ENCODE measurements at regions of chr1 and their contacts with region 1.

Region 1: DNA sequence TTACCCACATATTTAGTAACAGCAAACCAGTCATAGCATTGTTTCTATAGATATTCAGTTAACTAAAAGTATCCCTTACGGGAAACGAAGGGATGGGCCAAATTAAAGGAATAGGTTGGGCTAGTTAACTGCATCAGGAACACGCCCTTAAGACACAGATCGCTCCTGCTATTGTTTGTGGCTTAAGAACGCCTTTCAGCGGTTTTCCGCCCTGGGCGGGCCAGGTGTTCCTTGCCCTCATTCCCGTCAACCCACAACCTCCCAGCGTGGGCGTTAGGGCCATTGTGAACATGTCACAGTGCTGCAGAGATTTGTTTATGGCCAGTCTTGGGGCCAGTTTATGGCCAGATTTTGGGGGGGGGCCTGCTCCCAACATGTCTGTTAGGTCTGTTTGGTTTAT is 14.7 kb downstream of the TNFRSF18 start:
- DNase-seq: peak in 1 of 6 donors; percentile 12
- ATAC-seq: no peak
- H3K4me3 ChIP-seq: no peak overlapping the region
- H3K27ac ChIP-seq: no peak overlapping the region
- H3K4me1 ChIP-seq: no peaks in the 10 kb centered on the region
- H3K27me3 ChIP-seq: no peaks in the 10 kb centered on the region
- CTCF ChIP-seq: no peak

Region 2: DNA sequence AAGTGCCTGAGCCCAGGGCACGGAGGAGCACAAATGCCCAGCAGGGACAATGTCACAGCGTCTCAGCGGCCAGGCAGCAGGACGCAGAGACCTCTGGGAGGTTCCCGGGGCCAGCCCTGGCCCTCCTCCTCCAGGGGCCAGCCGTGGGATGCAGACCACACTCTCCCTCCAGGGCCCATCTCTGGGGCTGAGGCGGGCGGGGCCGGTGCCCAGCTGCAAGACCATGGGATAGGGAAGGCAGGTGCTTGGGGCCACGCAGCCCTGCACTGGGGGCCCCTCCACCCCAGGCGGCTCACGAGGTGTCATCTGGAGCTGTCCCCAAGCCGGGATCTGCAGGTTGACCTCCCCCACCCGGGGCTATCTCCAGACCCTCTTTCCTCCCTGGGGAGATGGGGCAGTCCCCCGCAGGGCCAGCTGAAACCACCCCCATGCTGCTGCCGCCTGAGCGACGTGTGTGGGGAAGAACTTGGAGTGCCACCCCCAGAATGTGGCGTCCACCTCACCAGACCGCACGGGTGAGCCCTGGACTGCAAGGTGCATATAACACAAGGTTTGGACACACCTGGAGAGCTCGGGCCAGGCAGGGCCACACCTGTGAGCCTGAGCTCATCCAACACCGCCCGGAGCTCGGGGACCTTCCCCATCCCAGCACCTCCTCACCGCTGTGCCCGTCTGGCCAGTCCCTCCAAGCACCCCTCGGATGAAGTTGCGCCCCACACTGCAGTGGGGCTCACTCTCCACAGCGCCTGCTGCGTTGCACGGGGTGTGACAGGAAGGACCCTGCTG is 22.1 kb before region 1 on chr1:
- intact Hi-C with region 1: loop called in 1 of 3 experiments (anchors 2 kb)
- DNase-seq: peak in 4 of 6 donors; percentile 5 to 73 (median 45)
- ATAC-seq: no peak
- H3K4me3 ChIP-seq: no peak overlapping the region
- H3K27ac ChIP-seq: no peak overlapping the region
- H3K4me1 ChIP-seq: peaks cover 5 to 14% (median 6%) of the 10 kb centered on the region in 3 donors
- H3K27me3 ChIP-seq: no peaks in the 10 kb centered on the region
- CTCF ChIP-seq: no peak

Region 3: DNA sequence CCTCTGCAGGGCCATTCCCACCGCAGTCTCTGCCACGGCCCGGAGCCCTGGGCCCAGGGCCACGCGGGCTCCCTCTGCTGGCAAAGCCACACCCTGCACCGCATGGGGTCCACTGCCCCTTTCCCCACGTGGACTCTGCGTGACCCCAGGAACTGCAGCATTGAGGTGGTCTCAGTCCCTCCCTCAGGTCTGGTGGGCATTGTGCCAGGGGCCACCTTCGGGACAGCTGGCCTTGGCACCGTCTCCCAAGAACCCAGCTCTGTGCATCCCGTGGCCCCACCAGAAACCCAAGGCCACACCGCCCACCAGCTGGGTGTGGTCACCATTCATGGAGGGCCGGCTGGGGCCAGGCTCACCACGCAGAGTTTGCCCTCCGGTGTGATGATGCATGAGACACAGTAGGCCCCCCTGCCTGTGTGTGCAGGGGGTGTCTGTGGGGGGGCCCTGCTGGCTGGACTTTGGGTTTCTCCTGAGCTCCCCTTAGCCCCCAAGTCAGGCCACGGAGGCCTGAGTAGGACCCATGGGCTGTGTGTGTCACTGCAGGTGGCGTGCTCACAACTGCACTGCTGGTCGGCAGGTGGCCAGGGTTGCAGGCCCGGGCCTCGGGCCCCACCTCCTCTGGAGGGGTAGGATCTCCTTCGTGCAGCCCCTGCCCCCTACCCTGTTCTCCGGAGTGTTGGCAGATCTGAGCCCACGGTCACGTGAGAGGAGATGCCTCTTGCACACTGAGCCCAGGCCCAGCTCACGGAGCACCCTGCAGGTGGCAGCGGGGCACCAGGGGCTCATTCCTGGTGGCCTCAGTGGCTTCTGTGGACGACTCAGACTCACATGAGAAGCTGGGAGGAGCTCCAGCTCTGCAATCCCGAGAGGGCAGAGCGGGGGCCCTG is 249.5 kb after region 1 on chr1:
- intact Hi-C with region 1: no loop called
- DNase-seq: peak; percentile 44 to 87 (median 72)
- ATAC-seq: peak; percentile 63 to 72 (median 65)
- H3K4me3 ChIP-seq: no peak overlapping the region
- H3K27ac ChIP-seq: peak overlapping the region in 2 of 4 donors; percentile 20 to 53
- H3K4me1 ChIP-seq: peaks cover 33 to 34% (median 33%) of the 10 kb centered on the region in 3 donors
- H3K27me3 ChIP-seq: no peaks in the 10 kb centered on the region
- CTCF ChIP-seq: peak; percentile 80 to 93 (median 88)